Left lung (tissue), 14 donors: ENCODE measurements at regions of chr21 and their contacts with region 1.

Region 1: GRCh38 chr21:17903029-17903806 is 84.1 kb upstream of the C21orf91 start:
- DNase-seq: peak in 1 of 4 donors; percentile 40
- ATAC-seq: peak; percentile 65
- H3K4me3 ChIP-seq: no peak overlapping the region
- H3K27ac ChIP-seq: no peak overlapping the region
- H3K4me1 ChIP-seq: peaks cover 0 to 6% of the 10 kb centered on the region in 2 donors
- H3K27me3 ChIP-seq: no peaks in the 10 kb centered on the region
- CTCF ChIP-seq: no peak

Region 2: DNA sequence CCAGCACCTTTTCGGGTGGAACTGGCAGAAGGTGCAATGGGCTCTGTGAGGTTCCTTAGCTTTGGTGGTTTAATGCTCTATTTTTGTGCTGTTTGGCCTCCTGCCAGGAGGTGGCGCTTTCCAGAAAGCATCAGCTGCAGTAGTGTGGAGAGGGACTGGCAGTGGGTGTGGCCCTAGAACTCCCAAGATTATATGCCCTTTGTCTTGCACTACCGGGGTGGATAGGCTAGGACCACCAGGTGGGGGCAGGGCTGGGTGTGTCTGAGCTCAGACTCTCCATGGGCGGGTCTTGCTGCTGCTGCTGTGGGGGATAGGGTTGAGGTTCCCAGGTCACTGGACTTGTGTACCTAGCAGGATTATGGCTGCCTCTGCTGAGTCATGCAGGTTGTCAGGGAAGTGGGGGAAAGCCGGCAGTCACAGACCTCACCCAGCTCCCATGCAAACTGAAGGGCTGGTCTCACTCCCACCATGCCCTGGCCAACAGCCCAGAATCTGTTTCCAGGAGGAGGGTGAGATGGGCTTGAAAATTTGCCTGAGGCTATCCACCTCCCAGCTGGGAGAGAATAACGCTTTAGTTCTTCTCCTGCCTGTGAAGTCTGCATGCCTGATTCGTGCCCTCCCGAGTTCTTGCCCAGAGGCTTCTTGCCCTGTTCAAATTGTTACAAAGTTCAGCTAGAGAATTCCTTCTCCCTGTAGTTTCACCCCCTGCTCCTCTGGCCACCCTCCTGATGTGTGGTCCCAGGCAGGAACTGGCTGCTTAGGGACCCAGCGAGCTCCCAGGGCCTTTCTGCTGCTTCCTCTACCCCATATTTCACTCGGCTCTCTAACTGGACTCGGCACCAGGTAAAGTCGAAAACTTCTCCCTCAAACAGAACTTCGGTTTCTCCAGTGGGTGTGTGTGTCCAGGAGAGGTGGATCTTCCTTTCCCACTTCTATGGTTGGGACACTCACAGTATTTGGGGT is 214.0 kb before region 1 on chr21:
- intact Hi-C with region 1: loop called (anchors 10 kb)
- DNase-seq: peak in 3 of 4 donors; percentile 20 to 42 (median 35)
- ATAC-seq: peak; percentile 41
- H3K4me3 ChIP-seq: no peak overlapping the region
- H3K27ac ChIP-seq: no peak overlapping the region
- H3K4me1 ChIP-seq: peaks cover 0 to 9% of the 10 kb centered on the region in 2 donors
- H3K27me3 ChIP-seq: no peaks in the 10 kb centered on the region
- CTCF ChIP-seq: peak in 1 of 2 donors; percentile 25